Breast epithelium (tissue), 4 donors: ENCODE measurements at regions of chr3 and their contacts with region 1.

Region 1: GRCh38 chr3:30855400-30856292 is 38.8 kb downstream of the GADL1 start:
- DNase-seq: no peak
- H3K4me3 ChIP-seq: no peak overlapping the region
- H3K27ac ChIP-seq: no peak overlapping the region
- H3K4me1 ChIP-seq: no peaks in the 10 kb centered on the region
- H3K27me3 ChIP-seq: no peaks in the 10 kb centered on the region
- CTCF ChIP-seq: no peak
- POLR2A ChIP-seq: no peak

Region 2: DNA sequence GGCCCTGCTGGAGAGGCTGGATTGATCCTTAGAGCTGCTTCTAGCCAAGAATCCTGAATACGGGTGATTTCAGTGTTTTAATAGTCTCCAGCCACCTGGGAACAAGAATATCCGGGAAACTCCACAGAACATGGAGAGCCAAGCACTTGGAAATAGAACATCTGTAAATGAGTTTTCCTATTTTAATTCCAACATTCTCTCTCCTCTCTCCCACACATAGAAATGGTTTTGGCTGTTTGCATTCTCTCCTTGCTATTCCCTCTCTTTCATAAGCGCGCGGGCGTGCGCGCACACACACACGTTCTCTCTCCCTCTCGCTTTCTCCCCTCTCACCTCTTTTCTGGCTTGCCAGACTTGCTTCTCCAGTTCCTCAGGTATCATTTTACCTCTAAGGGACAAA is 11.8 kb before region 1 on chr3:
- intact Hi-C with region 1: loop called (anchors 1 kb)
- DNase-seq: no peak
- H3K4me3 ChIP-seq: no peak overlapping the region
- H3K27ac ChIP-seq: no peak overlapping the region
- H3K4me1 ChIP-seq: no peaks in the 10 kb centered on the region
- H3K27me3 ChIP-seq: no peaks in the 10 kb centered on the region
- CTCF ChIP-seq: no peak
- POLR2A ChIP-seq: no peak